Posterior vena cava (tissue), 2 donors: ENCODE measurements at regions of chr10 and their contacts with region 1.

Region 1: DNA sequence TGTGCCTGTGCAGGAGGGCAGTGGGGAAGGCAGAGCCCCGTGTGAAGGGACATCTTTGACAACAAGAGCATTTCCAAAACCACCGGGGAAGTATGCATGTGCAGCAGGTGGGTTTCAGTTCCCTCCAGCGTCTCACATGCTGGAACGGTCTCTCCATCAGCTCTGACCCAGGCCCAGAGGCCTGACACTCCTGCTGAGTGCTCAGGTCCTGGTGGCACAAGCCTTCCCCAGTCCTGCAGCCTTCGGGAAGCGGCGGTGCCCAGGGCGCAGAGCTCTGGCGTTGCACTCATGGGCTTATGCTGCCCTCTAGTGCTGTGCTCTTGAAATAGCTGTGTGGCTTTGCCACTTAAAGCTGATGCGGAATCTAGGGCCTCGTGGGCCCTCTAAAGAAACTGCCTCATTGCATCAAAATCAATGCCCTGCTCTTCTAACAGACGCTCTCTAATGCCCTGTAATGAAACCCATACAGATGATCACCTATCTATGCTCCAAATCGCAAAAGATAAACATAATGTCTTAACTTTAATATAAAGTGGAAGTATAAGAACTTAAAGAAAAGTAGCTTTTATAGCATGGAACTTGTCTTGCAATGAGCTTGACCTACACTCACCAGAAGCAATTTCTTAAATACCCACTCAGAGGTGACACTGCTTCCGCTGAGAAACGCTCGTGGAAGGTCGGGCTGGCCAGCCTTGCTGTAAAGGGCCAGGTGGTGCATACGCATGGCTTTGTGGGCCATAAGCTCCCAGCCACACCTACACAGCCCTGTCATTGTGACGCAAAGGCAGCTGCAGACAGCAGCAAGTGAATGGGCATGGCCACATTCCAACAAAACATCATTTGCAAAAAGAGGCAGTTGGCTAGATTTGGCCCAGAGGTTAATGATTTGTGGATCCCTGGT is 38.6 kb downstream of the CLRN3 start:
- DNase-seq: peak; percentile 85

Region 2: DNA sequence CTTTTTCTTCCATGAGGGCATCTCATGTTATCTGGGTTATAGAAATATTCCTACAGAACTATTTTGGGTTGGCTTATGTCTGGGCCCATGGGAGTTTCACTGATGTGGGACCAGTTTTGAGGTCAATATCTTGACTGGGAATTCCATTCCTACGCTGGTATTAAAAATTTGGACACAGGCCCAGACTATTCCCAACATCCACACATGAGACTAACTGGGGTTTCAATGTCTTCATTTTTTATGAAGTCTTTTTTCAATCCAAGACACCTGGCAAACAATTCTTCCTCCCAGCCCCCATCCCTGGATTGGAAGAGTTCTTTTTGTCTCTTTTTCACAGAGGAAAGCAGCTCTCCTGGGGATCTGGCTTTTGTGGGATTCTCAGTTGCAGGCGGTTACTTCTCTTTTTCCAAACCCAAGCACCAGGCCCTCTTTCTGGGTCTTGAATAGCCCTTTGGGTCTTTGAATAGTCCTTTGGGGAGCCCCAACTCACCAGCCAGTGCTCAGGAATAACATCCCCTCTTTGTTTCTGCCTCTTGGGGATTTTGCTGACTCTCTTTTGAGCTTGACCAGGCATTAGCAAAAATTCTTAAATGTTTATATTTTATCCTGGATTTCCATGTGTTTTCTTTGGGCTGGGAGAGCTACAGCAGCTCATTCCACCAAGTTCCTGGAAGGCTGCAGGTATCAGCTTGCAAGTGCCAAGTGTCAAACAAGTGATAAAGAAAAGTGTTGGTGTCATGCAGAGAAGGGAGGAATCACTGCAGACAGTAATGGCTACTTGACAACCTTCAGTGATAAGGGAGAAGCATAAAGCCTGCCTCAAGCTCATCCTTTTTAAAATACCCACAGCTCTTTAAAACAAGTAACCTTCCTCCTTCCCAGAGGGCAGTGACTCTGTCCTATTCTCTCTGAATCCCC is 1700.1 kb before region 1 on chr10:
- intact Hi-C with region 1: loop called in 1 of 2 experiments (anchors 5 kb)
- DNase-seq: no peak

Region 3: DNA sequence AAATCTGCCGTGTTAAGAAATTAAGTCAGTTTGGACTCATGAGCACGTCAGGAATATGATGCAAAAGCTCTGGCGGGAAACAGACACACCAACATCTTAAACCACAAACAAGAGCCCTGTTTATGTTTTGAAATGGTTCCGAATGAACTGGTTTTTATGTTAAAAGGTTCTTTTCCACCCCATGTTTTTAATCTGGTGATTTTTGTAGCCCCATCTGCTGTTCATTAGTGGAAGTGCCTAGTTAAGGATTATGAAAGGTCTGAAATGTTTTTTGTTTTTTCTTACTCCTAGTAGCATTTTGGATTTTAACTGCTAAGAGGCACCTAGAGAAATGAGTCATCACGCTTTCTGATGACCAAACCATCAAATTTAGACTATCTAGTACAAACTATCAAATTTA is 676.2 kb after region 1 on chr10:
- intact Hi-C with region 1: loop called in 1 of 2 experiments (anchors 5 kb)
- DNase-seq: no peak